AG04450 (cell line): ENCODE measurements at regions of chr3 and their contacts with region 1.

Region 1: GRCh38 chr3:136612512-136612911 is 139.7 kb downstream of the STAG1 start:
- DNase-seq: no peak
- H3K4me3 ChIP-seq: no peak overlapping the region
- H3K27ac ChIP-seq: no peak overlapping the region
- H3K27me3 ChIP-seq: no peaks in the 10 kb centered on the region
- CTCF ChIP-seq: no peak

Region 2: DNA sequence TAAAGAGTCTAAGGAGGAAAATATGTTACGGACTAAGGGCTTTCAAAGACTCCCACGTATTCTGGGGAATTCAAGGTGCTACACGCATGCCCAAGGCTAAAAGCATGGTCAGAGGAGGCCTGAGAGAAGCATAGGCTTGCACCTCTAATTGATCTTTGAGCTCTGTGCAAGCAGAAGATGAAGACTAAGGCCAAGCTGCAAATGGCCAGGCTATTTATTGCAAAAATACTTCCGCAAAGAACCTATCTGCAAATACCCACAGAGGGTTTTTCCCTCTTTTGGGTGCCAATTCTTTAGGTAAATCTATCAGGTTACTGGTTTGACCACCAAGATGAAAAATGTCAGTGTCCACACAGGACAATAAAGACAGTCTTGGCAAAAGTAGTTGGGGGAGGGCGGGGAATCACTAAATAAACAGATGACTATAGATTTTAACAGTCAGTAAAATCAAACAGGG is 20.1 kb after region 1 on chr3:
- CTCF ChIA-PET with region 1: interaction called, 10 read pairs
- POLR2A ChIA-PET with region 1: no interaction called
- DNase-seq: no peak
- H3K4me3 ChIP-seq: no peak overlapping the region
- H3K27ac ChIP-seq: no peak overlapping the region
- H3K27me3 ChIP-seq: no peaks in the 10 kb centered on the region
- CTCF ChIP-seq: no peak